ENCODE measurements at regions of chr3 and their contacts with region 1.

Region 1: GRCh38 chr3:38496131-38496910 is at the start of gene EXOG:
- DNase-seq: peak; percentile 87
- H3K4me3 Mint-ChIP-seq: peak within 1 kb of the TSS; percentile 95
- H3K27ac Mint-ChIP-seq: peak within 1 kb of the TSS; percentile 87
- H3K4me1 Mint-ChIP-seq: peaks cover 34% of the 10 kb centered on the region
- H3K27me3 Mint-ChIP-seq: no peaks in the 10 kb centered on the region
- total RNA-seq, gene EXOG: 20.0 and 21.6 TPM in 2 replicates

Region 2: DNA sequence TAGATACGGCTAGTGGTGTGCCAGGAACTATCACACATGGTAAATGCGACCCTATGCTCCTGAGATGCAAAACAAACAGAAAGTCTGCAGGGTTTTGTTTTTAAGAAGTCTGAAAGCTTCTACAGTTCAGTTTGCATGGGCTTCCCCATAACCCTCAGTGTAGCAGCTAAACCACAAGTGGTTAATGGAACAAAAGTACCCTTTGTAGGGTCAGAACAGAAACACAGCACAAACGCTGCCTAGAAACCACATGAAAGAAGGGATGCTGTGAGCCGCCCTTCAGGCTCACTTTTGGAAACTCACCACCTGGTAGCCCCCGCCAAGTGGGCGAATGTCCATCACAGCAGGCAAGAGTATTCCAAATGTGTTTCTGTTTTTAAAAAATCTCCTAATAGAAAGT is 588.4 kb before region 1 on chr3:
- intact Hi-C with region 1: loop called (anchors 5 kb)
- DNase-seq: peak; percentile 56
- H3K4me3 Mint-ChIP-seq: peak overlapping the region; percentile 67
- H3K27ac Mint-ChIP-seq: peak overlapping the region; percentile 84
- H3K4me1 Mint-ChIP-seq: peaks cover 53% of the 10 kb centered on the region
- H3K27me3 Mint-ChIP-seq: peaks cover 15% of the 10 kb centered on the region

Region 3: DNA sequence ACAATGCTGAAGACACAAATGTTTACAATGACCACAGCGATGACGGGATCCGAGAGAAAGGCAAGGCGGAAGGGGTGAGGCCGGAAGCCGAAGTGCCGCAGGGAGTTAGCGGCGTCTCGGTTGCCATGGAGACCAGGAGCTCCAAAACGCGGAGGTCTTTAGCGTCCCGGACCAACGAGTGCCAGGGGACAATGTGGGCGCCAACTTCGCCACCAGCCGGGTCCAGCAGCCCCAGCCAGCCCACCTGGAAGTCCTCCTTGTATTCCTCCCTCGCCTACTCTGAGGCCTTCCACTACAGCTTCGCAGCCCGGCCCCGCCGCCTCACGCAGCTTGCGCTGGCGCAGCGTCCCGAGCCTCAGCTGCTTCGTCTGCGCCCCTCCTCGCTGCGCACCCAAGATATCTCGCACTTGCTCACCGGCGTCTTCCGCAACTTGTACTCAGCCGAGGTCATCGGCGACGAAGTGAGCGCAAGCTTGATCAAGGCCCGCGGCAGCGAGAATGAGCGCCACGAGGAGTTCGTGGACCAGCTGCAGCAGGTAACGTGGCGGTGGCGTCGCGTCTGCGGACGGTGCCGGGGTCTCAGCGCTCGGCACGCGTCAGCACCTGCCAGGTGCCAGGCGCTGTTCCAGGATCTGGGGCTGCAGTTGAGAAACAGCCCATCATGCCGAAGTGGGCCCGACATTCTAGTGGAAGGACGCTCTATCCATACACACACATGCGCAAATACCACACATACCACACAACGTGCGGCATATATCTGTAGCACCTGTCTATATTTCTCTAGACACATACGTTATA is 457.0 kb before region 1 on chr3 and contains the start of gene DLEC1:
- intact Hi-C with region 1: loop called (anchors 1 kb)
- DNase-seq: peak; percentile 84
- H3K4me3 Mint-ChIP-seq: peak within 1 kb of the TSS; percentile 75
- H3K27ac Mint-ChIP-seq: peak within 1 kb of the TSS; percentile 93
- H3K4me1 Mint-ChIP-seq: peaks cover 36% of the 10 kb centered on the region
- H3K27me3 Mint-ChIP-seq: peaks cover 7% of the 10 kb centered on the region
- total RNA-seq, gene DLEC1: 0.10 and 0.12 TPM in 2 replicates

Region 4: DNA sequence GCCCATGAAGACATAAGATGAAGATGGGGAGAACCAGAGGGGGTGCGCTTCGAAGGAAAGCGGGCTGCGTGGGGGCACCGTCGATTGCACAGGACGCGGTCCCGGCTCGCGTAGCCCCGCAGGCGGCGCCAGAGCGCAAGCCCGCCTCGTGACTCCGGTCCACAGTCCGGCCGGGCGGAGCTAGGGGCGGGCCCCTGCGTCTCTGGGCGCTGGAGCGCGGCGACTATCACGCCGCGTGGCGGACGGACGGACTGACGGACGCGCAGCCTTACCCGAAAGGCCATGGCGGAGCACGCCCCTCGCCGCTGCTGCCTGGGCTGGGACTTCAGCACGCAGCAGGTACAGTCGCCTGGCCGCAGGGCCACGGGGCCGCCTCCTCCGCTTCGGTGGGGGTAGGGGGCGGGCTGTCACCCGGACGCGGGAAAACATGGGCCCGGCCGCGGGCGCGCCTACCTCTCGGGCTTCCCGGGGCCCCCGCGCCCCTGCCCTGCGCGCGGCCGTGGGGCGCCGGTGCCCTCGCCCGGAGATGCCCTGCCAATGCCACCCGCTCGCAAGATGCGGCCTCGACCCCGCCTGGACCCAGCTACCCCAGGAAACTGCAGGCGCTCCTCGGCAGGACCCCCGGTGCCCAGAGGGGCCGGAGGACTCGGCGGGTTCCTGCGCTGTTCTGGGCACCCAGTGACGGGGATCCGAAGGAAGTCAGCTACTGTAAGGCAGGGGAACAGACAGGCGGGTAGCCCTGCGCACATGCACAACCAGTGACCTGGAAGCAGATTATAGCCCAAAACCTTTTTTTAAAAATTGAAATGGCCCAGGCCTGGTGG is 149.5 kb before region 1 on chr3 and contains the start of gene XYLB:
- intact Hi-C with region 1: loop called (anchors 1 kb)
- DNase-seq: peak; percentile 76
- H3K4me3 Mint-ChIP-seq: peak within 1 kb of the TSS; percentile 85
- H3K27ac Mint-ChIP-seq: no peak within 1 kb of the TSS
- H3K4me1 Mint-ChIP-seq: peaks cover 8% of the 10 kb centered on the region
- H3K27me3 Mint-ChIP-seq: peaks cover 8% of the 10 kb centered on the region
- total RNA-seq, gene XYLB: 7.1 and 9.9 TPM in 2 replicates

Region 5: GRCh38 chr3:38421679-38422336 is 74.5 kb before region 1 on chr3:
- intact Hi-C with region 1: no loop called
- DNase-seq: no peak
- H3K4me3 Mint-ChIP-seq: no peak overlapping the region
- H3K27ac Mint-ChIP-seq: no peak overlapping the region
- H3K4me1 Mint-ChIP-seq: peaks cover 31% of the 10 kb centered on the region
- H3K27me3 Mint-ChIP-seq: no peaks in the 10 kb centered on the region

Region 6: GRCh38 chr3:38521391-38521987 is 25.2 kb after region 1 on chr3:
- intact Hi-C with region 1: loop called (anchors 1 kb)
- DNase-seq: peak; percentile 37
- H3K4me3 Mint-ChIP-seq: no peak overlapping the region
- H3K27ac Mint-ChIP-seq: no peak overlapping the region
- H3K4me1 Mint-ChIP-seq: peaks cover 33% of the 10 kb centered on the region
- H3K27me3 Mint-ChIP-seq: no peaks in the 10 kb centered on the region

Region 7: GRCh38 chr3:38662544-38662943 is 166.2 kb after region 1 on chr3:
- intact Hi-C with region 1: loop called (anchors 1 kb)
- DNase-seq: no peak
- H3K4me3 Mint-ChIP-seq: no peak overlapping the region
- H3K27ac Mint-ChIP-seq: no peak overlapping the region
- H3K4me1 Mint-ChIP-seq: no peaks in the 10 kb centered on the region
- H3K27me3 Mint-ChIP-seq: peaks cover 33% of the 10 kb centered on the region

Region 8: GRCh38 chr3:39383045-39383880 is 886.9 kb after region 1 on chr3 and contains the start of gene SLC25A38:
- intact Hi-C with region 1: loop called (anchors 10 kb)
- DNase-seq: peak; percentile 74
- H3K4me3 Mint-ChIP-seq: peak within 1 kb of the TSS; percentile 94
- H3K27ac Mint-ChIP-seq: peak within 1 kb of the TSS; percentile 97
- H3K4me1 Mint-ChIP-seq: peaks cover 34% of the 10 kb centered on the region
- H3K27me3 Mint-ChIP-seq: no peaks in the 10 kb centered on the region
- total RNA-seq, gene SLC25A38: 40.0 and 43.1 TPM in 2 replicates